Heart right ventricle (tissue), 16 donors: ENCODE measurements at regions of chr11 and their contacts with region 1.

Region 1: GRCh38 chr11:76444384-76445123 is at the start of gene EMSY:
- DNase-seq: peak; percentile 94 to 98
- ATAC-seq: peak; percentile 96 to 98 (median 97)
- H3K4me3 ChIP-seq: peak within 1 kb of the TSS; percentile 74 to 99 (median 97)
- H3K27ac ChIP-seq: peak within 1 kb of the TSS; percentile 60 to 98 (median 92)
- H3K4me1 ChIP-seq: peaks cover 0 to 35% (median 22%) of the 10 kb centered on the region in 9 donors
- H3K27me3 ChIP-seq: no peaks in the 10 kb centered on the region
- CTCF ChIP-seq: no peak
- total RNA-seq, gene EMSY: 14.2 to 23.4 (median 18.1) TPM

Region 2: GRCh38 chr11:76380967-76381719 is 63.4 kb before region 1 on chr11 and contains the starts of genes GVQW3 and THAP12:
- intact Hi-C with region 1: loop called in 8 of 10 experiments (anchors 1 to 10 kb)
- DNase-seq: peak; percentile 98 to 99
- ATAC-seq: peak; percentile 97 to 99 (median 99)
- H3K4me3 ChIP-seq: peak within 1 kb of the TSS; percentile 67 to 99 (median 94)
- H3K27ac ChIP-seq: peak within 1 kb of the TSS; percentile 42 to 94 (median 91)
- H3K4me1 ChIP-seq: peaks cover 2 to 49% (median 36%) of the 10 kb centered on the region in 9 donors
- H3K27me3 ChIP-seq: no peaks in the 10 kb centered on the region
- CTCF ChIP-seq: peak in 4 of 9 donors; percentile 39 to 54 (median 46)
- total RNA-seq, gene GVQW3: 0.93 to 2.7 (median 1.8) TPM
- total RNA-seq, gene THAP12: 18.1 to 25.8 (median 22.4) TPM

Region 3: DNA sequence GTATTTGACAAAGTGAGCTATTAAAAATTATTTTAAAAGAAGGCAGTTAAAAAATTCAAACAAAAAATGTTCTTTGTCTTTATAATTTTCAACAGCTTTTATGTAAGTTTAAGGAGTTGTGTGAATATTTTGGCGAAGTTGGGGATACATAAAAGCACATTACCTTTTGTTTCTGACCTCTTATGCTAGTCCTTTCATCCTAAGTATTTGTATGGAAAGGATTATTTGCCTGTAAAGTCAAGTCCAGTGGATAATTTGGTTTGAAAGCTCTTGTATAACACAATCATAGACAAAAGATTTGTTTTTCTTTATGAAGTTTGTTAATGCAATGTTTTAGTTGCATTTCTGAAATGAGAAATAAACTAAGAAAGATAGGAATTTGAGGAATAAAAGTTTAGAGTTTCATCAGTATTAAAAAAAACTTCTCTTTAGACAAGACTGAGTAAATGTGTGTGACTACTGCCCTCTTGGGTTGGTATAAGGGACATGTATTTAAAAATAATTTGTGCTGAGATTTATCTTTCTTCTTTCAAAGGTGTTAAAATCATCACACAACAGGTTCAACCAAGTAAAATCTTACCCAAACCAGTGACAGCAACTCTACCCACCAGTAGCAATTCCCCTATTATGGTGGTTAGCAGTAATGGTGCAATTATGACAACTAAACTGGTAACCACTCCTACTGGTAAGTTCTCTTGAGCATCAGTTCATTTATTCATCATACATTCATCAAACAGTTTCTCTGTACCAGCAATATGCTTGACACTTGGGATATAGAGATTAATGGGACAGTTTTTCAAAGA is 68.5 kb after region 1 on chr11:
- intact Hi-C with region 1: loop called in 1 of 10 experiments (anchors 10 kb)
- DNase-seq: no peak
- ATAC-seq: peak in 2 of 8 donors; percentile 52
- H3K4me3 ChIP-seq: no peak overlapping the region
- H3K27ac ChIP-seq: no peak overlapping the region
- H3K4me1 ChIP-seq: peaks cover 0 to 20% (median 10%) of the 10 kb centered on the region in 9 donors
- H3K27me3 ChIP-seq: no peaks in the 10 kb centered on the region
- CTCF ChIP-seq: peak in 7 of 9 donors; percentile 36 to 61 (median 57)